ENCODE measurements at regions of chr17 and their contacts with region 1.

Region 1: GRCh38 chr17:64707019-64707591 is 45.0 kb upstream of the SMURF2 start:
- DNase-seq: peak; percentile 100
- ATAC-seq: peak; percentile 74
- H3K4me3 ChIP-seq: peak overlapping the region; percentile 32 to 39
- H3K27ac ChIP-seq: peak overlapping the region; percentile 93
- H3K4me1 ChIP-seq: peaks cover 94 to 100% of the 10 kb centered on the region in 2 experiments
- H3K27me3 ChIP-seq: no peaks in the 10 kb centered on the region
- CTCF ChIP-seq: no peak
- POLR2A ChIP-seq: peak; percentile 55
- RAD21 ChIP-seq: no peak

Region 2: GRCh38 chr17:64506576-64507477 is 200.3 kb before region 1 on chr17 and contains the start of gene CEP95:
- CTCF ChIA-PET with region 1: no interaction called
- POLR2A ChIA-PET with region 1: interaction called, 11 read pairs
- RAD21 ChIA-PET with region 1: no interaction called
- intact Hi-C with region 1: no loop called
- DNase-seq: peak; percentile 98
- ATAC-seq: peak; percentile 66
- H3K4me3 ChIP-seq: peak within 1 kb of the TSS; percentile 93 to 95
- H3K27ac ChIP-seq: peak within 1 kb of the TSS; percentile 90
- H3K4me1 ChIP-seq: peaks cover 12 to 28% of the 10 kb centered on the region in 2 experiments
- H3K27me3 ChIP-seq: no peaks in the 10 kb centered on the region
- CTCF ChIP-seq: no peak
- POLR2A ChIP-seq: peak; percentile 43
- RAD21 ChIP-seq: no peak
- total RNA-seq, gene CEP95: 77.0 TPM

Region 3: GRCh38 chr17:64661976-64662773 is 44.9 kb before region 1 on chr17 and contains the start of gene SMURF2:
- CTCF ChIA-PET with region 1: no interaction called
- POLR2A ChIA-PET with region 1: interaction called, 13 read pairs
- RAD21 ChIA-PET with region 1: no interaction called
- intact Hi-C with region 1: loop called (anchors 2 kb)
- DNase-seq: no peak
- ATAC-seq: peak; percentile 76
- H3K4me3 ChIP-seq: peak within 1 kb of the TSS; percentile 81 to 82
- H3K27ac ChIP-seq: peak within 1 kb of the TSS; percentile 96
- H3K4me1 ChIP-seq: peaks cover 72 to 83% of the 10 kb centered on the region in 2 experiments
- H3K27me3 ChIP-seq: no peaks in the 10 kb centered on the region
- CTCF ChIP-seq: no peak
- POLR2A ChIP-seq: peak; percentile 89
- RAD21 ChIP-seq: peak; percentile 11; the same call in 1 of the 2 replicates
- total RNA-seq, gene SMURF2: 127 TPM

Region 4: DNA sequence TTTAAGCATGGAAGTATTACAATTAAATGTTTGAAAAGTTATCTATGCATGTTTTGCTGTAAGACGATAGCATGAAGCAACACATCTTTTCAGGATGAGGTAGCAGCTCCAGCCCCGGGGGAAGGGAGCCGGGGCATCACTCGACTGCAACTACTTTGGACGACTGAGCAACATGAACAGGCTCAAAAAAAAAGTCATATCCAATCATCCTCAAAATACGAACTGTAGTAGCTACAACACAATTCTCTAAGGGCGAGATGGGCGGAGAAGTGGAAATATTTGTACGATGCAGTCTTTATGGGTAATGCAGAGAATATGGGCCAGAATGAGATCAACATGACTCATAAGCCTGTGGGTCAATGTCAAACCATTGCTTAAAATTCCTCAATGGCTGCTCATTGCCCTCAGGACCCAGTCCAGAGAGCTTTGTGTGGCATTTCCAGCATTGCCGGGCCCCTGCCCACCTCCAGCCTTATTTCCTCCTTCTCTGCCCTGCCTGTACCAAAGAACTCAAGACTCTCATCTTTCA is 27.4 kb before region 1 on chr17:
- CTCF ChIA-PET with region 1: no interaction called
- POLR2A ChIA-PET with region 1: interaction called, 40 read pairs
- RAD21 ChIA-PET with region 1: interaction called in 1 of 2 experiments, 5 read pairs
- intact Hi-C with region 1: no loop called
- DNase-seq: peak; percentile 91
- ATAC-seq: peak; percentile 71
- H3K4me3 ChIP-seq: peak overlapping the region; percentile 9 to 42
- H3K27ac ChIP-seq: peak overlapping the region; percentile 88
- H3K4me1 ChIP-seq: peaks cover 59 to 80% of the 10 kb centered on the region in 2 experiments
- H3K27me3 ChIP-seq: no peaks in the 10 kb centered on the region
- CTCF ChIP-seq: no peak
- POLR2A ChIP-seq: no peak
- RAD21 ChIP-seq: no peak; the same call in 1 of the 2 replicates

Region 5: DNA sequence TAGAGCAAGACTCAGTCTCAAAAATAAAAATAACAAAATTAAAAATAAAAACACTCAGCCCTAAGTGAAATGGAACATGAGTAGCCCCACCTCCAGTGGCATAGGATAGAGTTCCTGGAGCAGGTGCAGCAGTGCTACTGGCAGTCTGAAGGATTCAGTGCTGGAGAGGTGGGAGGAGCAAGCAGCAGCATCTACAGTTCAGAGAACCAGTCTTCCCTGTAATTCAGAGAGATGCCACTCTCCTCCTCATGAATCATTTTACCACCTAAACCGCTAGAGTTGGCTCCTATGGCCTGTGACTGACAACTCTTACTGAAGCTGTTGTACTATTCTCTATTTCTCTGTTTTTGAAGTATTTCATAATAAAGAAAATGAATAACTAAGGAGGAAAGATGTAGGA is 11.0 kb after region 1 on chr17:
- CTCF ChIA-PET with region 1: no interaction called
- POLR2A ChIA-PET with region 1: interaction called, 28 read pairs
- RAD21 ChIA-PET with region 1: no interaction called
- intact Hi-C with region 1: no loop called
- DNase-seq: no peak
- ATAC-seq: peak; percentile 43
- H3K4me3 ChIP-seq: no peak overlapping the region
- H3K27ac ChIP-seq: no peak overlapping the region
- H3K4me1 ChIP-seq: peaks cover 40 to 42% of the 10 kb centered on the region in 2 experiments
- H3K27me3 ChIP-seq: no peaks in the 10 kb centered on the region
- CTCF ChIP-seq: no peak
- POLR2A ChIP-seq: no peak
- RAD21 ChIP-seq: no peak

Region 6: GRCh38 chr17:64723781-64724180 is 16.7 kb after region 1 on chr17:
- CTCF ChIA-PET with region 1: no interaction called
- POLR2A ChIA-PET with region 1: interaction called, 28 read pairs
- RAD21 ChIA-PET with region 1: no interaction called
- intact Hi-C with region 1: no loop called
- DNase-seq: no peak
- ATAC-seq: peak; percentile 39; the same call in 1 of the 2 replicates
- H3K4me3 ChIP-seq: no peak overlapping the region
- H3K27ac ChIP-seq: peak overlapping the region; percentile 10
- H3K4me1 ChIP-seq: peaks cover 39 to 53% of the 10 kb centered on the region in 2 experiments
- H3K27me3 ChIP-seq: no peaks in the 10 kb centered on the region
- CTCF ChIP-seq: no peak
- POLR2A ChIP-seq: no peak
- RAD21 ChIP-seq: no peak

Region 7: GRCh38 chr17:64736804-64737492 is 29.8 kb after region 1 on chr17:
- CTCF ChIA-PET with region 1: no interaction called
- POLR2A ChIA-PET with region 1: interaction called, 14 read pairs
- RAD21 ChIA-PET with region 1: no interaction called
- intact Hi-C with region 1: no loop called
- DNase-seq: peak; percentile 61
- ATAC-seq: peak; percentile 75
- H3K4me3 ChIP-seq: no peak overlapping the region
- H3K27ac ChIP-seq: no peak overlapping the region
- H3K4me1 ChIP-seq: peaks cover 33 to 63% of the 10 kb centered on the region in 2 experiments; a peak in 3 of 4 replicates
- H3K27me3 ChIP-seq: no peaks in the 10 kb centered on the region
- CTCF ChIP-seq: peak; percentile 82 to 96 (median 91); a peak in 5 of 6 replicates
- POLR2A ChIP-seq: no peak
- RAD21 ChIP-seq: peak; percentile 99

Measured in HCT116 (cell line).